Panc1 (cell line): ENCODE measurements at regions of chr14 and their contacts with region 1.

Region 1: GRCh38 chr14:20613094-20614037 is 22.2 kb upstream of the RNASE12 start:
- DNase-seq: peak; percentile 98
- ATAC-seq: peak; percentile 92
- H3K4me3 ChIP-seq: peak overlapping the region; percentile 83 to 94
- H3K27ac ChIP-seq: peak overlapping the region; percentile 75
- H3K4me1 ChIP-seq: peaks cover 23% of the 10 kb centered on the region
- H3K27me3 ChIP-seq: no peaks in the 10 kb centered on the region
- CTCF ChIP-seq: peak; percentile 78

Region 2: GRCh38 chr14:20327005-20327869 is 286.1 kb before region 1 on chr14:
- CTCF ChIA-PET with region 1: no interaction called
- POLR2A ChIA-PET with region 1: no interaction called
- in situ Hi-C with region 1: no loop called
- intact Hi-C with region 1: loop called (anchors 5 kb)
- DNase-seq: peak; percentile 32
- ATAC-seq: no peak
- H3K4me3 ChIP-seq: no peak overlapping the region
- H3K27ac ChIP-seq: no peak overlapping the region
- H3K4me1 ChIP-seq: peaks cover 6% of the 10 kb centered on the region
- H3K27me3 ChIP-seq: no peaks in the 10 kb centered on the region
- CTCF ChIP-seq: peak; percentile 65; the same call in 1 of the 2 replicates

Region 3: GRCh38 chr14:20469242-20469889 is 144.0 kb before region 1 on chr14 and contains the start of gene PNP:
- CTCF ChIA-PET with region 1: no interaction called
- POLR2A ChIA-PET with region 1: no interaction called
- in situ Hi-C with region 1: no loop called
- intact Hi-C with region 1: loop called (anchors 5 kb)
- DNase-seq: peak; percentile 67
- ATAC-seq: peak; percentile 98
- H3K4me3 ChIP-seq: peak within 1 kb of the TSS; percentile 82 to 96
- H3K27ac ChIP-seq: peak within 1 kb of the TSS; percentile 74
- H3K4me1 ChIP-seq: peaks cover 3% of the 10 kb centered on the region
- H3K27me3 ChIP-seq: no peaks in the 10 kb centered on the region
- CTCF ChIP-seq: no peak
- total RNA-seq, gene PNP: 35.1 TPM

Region 4: DNA sequence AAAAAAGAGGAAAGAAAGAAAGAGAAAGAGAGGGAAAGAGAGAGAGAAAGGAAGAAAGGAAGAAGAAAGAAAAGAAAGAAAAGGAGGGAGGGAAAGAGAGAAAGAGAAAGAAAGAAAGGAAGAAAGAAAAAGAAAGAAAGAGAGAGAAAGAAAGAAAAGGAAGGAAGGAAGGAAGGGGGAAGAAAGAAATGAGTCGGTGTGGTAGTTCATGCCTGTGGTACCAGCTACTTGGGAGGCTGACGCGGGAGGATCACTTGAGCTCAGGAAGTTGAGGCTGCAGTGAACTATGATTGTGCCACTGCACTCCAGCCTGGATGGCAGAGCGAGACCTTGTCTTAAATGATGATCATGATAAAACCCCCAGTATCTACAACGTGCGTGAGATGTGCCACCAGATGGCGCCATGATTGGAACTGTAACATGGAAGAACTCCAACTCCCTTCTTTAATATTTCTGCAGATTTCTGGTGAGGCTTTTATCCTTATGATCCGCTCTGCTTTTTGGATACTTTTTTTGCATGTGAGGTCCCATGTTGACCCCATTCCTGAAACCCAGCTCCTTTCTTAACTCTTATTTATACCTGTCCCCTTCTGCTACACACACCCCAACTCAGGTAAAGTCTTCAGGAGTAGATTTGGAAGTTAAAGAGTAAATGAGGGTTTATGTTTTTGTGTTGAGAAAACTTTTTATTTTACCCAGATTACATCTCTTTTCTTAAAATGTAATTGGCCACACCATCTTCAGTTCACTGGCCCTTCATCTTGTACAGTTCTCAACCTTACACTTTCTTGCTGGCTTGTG is 82.4 kb before region 1 on chr14:
- CTCF ChIA-PET with region 1: no interaction called
- POLR2A ChIA-PET with region 1: no interaction called
- in situ Hi-C with region 1: no loop called
- intact Hi-C with region 1: loop called (anchors 5 kb)
- DNase-seq: peak; percentile 45
- ATAC-seq: peak; percentile 79
- H3K4me3 ChIP-seq: no peak overlapping the region
- H3K27ac ChIP-seq: no peak overlapping the region
- H3K4me1 ChIP-seq: no peaks in the 10 kb centered on the region
- H3K27me3 ChIP-seq: peaks cover 5% of the 10 kb centered on the region; the same call in 1 of the 2 replicates
- CTCF ChIP-seq: peak; percentile 79

Region 5: GRCh38 chr14:20682435-20683124 is 69.2 kb after region 1 on chr14:
- CTCF ChIA-PET with region 1: interaction called, 3 read pairs
- POLR2A ChIA-PET with region 1: no interaction called
- in situ Hi-C with region 1: no loop called
- intact Hi-C with region 1: loop called (anchors 5 kb)
- DNase-seq: peak; percentile 84
- ATAC-seq: peak; percentile 81
- H3K4me3 ChIP-seq: peak overlapping the region; percentile 81 to 97
- H3K27ac ChIP-seq: peak overlapping the region; percentile 96
- H3K4me1 ChIP-seq: peaks cover 3% of the 10 kb centered on the region
- H3K27me3 ChIP-seq: no peaks in the 10 kb centered on the region
- CTCF ChIP-seq: no peak

Region 6: DNA sequence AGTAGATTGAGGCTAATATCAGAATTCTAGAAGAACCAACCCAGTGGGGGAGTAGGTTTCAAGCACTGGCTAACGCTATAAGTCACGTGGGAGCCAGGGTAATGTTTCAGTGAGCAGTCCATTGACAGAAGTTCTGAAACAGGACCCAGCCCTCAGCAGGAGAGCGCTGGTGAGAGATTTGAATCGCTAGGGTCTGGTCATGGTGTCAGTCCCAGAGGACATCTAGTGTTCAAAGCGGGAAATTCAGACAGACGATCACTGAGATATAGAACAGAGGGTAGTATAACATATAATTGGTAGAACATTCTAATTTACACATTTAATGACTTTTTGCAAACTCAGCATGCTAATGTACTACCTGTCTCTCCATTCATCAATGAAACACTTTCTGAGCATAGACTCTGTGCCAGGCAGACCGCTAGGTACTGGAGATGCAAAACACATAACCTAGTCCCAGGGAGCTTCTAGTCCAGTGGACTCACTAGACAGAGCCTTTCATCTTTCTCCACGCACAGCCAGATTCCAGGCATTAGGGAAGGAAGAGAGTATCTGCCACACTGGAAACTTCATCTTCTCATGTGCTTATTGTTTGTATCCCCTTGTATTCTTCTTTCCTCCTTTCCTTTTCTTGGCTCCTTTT is 242.4 kb after region 1 on chr14:
- CTCF ChIA-PET with region 1: no interaction called
- POLR2A ChIA-PET with region 1: no interaction called
- in situ Hi-C with region 1: no loop called
- intact Hi-C with region 1: loop called (anchors 10 kb)
- DNase-seq: peak; percentile 51
- ATAC-seq: peak; percentile 97
- H3K4me3 ChIP-seq: no peak overlapping the region
- H3K27ac ChIP-seq: no peak overlapping the region
- H3K4me1 ChIP-seq: no peaks in the 10 kb centered on the region; the same call in 1 of the 2 replicates
- H3K27me3 ChIP-seq: peaks cover 5% of the 10 kb centered on the region
- CTCF ChIP-seq: peak; percentile 78